ENCODE measurements at regions of chr3 and their contacts with region 1.

Region 1: DNA sequence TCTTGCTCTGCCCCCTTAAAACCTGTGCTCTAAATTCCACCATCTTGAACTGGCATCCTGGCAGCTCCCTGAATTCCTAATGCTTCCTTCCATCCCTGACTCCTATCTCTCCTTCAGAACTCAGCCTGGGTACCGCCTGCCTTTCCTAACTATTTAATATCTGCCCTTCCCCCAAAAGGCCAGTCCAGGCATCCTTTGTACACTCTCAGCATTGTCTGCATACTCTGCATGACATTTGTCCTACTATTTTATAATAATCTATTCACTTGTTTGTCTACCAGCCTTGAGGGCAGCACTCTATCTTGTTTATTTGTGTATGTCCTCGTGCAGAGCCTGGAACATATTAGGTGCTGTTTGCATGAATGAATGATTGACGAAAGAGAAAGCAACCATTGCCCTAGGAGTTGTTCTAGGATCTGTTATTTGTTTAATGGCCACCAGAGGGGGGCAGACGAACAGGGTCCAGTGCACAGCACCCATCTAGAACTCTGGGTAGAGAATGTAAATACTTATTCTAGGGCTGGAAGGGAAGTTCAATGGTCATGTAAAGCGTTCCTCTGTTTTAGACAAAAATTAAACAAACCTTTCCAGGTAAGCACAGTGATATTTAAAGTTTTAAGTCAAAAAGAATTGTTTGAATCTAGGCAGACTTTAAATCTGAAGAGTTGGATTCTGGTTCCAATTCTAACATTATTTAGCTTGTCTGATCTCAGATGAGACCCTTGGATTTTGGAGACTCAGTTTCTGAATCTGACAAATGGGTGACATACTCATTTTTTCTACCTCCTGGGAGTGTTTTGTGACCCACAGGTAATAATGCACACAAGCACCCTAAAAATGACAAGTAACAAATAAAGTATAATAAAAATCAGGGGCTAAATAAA is 125.8 kb upstream of the GALNT15 start:
- DNase-seq: peak; percentile 43 to 79 (median 63)
- H3K4me3 ChIP-seq: peak overlapping the region in 1 of 4 donors; percentile 20
- H3K27ac ChIP-seq: no peak overlapping the region
- H3K4me1 ChIP-seq: no peaks in the 10 kb centered on the region
- H3K27me3 ChIP-seq: no peaks in the 10 kb centered on the region
- CTCF ChIP-seq: peak; percentile 55 to 94 (median 89)
- POLR2A ChIP-seq: no peak

Region 2: DNA sequence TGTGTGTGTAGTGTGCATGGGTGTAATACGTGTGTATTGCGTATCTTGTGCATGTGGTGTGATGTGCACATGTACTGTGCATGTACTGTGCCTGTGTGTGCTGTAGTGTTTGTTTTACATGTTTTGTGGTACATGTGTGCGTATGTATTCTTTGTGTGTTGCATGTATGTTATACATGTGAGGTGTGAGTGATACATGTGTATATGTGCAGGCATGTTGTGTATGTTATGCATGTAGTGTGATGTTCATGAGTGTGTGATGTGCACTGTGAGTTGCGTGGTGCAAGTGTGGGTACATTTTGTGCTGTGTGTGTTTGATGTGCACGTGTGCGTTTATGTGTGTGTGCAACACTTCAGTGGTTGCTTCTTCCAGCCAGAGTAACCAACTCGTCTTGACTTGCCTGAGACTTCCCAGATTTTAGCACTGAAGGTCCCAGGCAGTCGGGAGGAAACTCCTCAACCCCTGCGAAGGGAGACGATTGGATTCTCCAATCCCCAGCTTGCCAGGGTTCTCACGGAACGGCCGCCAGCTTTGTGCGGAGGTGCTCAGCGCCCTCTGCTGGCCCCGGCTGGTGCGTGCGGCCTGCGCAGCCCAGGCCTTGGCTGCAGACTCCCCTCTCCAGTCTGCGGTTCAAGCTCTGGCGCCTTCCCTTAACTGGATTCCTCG is 129.4 kb after region 1 on chr3:
- intact Hi-C with region 1: loop called (anchors 2 kb)
- DNase-seq: peak; percentile 68 to 90 (median 84)
- H3K4me3 ChIP-seq: peak overlapping the region in 1 of 4 donors; percentile 35
- H3K27ac ChIP-seq: no peak overlapping the region
- H3K4me1 ChIP-seq: peaks cover 0 to 13% of the 10 kb centered on the region in 2 donors
- H3K27me3 ChIP-seq: no peaks in the 10 kb centered on the region
- CTCF ChIP-seq: peak; percentile 93 to 98 (median 94)
- POLR2A ChIP-seq: no peak